Right ventricle myocardium superior (tissue), 1 donor: ENCODE measurements at regions of chr20 and their contacts with region 1.

Region 1: GRCh38 chr20:31608256-31608980 is 3.3 kb downstream of the ID1 start:
- DNase-seq: peak; percentile 84
- ATAC-seq: peak; percentile 3

Region 2: GRCh38 chr20:31572701-31573554 is 35.5 kb before region 1 on chr20:
- intact Hi-C with region 1: loop called (anchors 2 kb)
- DNase-seq: peak; percentile 94
- ATAC-seq: peak; percentile 92

Region 3: DNA sequence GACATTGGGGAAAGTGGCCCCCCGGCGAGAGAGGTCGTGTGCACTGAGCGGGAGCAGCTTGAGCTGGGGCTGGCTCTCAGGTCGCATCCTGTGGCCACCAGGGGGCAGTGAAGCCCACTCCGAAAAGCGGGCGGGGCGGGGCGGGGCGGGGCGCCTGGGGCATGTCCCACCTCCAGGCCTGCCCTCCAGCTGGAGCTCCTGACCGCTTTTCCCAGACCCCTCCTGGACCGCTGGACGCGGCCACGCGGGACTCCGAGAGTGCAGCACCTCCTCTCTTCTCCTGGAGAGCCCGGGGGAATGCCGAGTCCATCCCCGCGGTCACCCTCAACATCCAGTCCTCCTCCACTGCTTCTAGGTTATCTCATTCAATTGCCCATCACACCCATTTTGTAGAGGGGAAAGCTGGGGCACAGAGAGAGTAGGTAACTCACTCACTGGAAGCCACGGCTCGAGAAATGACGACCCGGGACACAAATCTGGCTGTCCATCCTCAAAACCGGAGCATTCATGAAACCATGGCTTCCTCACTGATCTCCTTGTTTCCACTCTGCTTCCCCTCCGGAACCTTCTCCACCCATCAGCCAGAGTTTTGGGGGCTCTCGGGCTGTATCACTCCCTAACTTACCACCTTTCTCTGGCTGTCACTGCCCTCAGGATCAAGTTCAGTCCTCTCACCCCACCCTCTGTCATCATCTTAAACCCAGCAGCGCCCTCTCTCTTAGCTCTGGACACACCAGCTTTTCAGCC is 53.4 kb after region 1 on chr20:
- intact Hi-C with region 1: no loop called
- DNase-seq: peak; percentile 89
- ATAC-seq: peak; percentile 81